Activated T-helper 1 cell treated with anti-CD3 and anti-CD28 coated beads, Interleukin-12 subunit alpha, Interleukin-12 subunit beta, Interleukin-2, Interleukin-4 antibody, amounts not matched to agents 30 ng/mL and 10 ng/mL and 1 ng/mL, durations not matched to agents 14 hours and 24 hours and 36 hours (primary cell): ENCODE measurements at regions of chr14 and their contacts with region 1.

Region 1: GRCh38 chr14:89178802-89179535 is 238.1 kb downstream of the FOXN3 start:
- DNase-seq: no peak
- H3K4me3 Mint-ChIP-seq: no peak overlapping the region
- H3K27ac Mint-ChIP-seq: peak overlapping the region; percentile 25
- H3K4me1 Mint-ChIP-seq: peaks cover 6% of the 10 kb centered on the region
- H3K27me3 Mint-ChIP-seq: no peaks in the 10 kb centered on the region

Region 2: GRCh38 chr14:89129570-89129969 is 49.4 kb before region 1 on chr14:
- intact Hi-C with region 1: no loop called
- DNase-seq: no peak
- H3K4me3 Mint-ChIP-seq: no peak overlapping the region
- H3K27ac Mint-ChIP-seq: no peak overlapping the region
- H3K4me1 Mint-ChIP-seq: no peaks in the 10 kb centered on the region
- H3K27me3 Mint-ChIP-seq: peaks cover 6% of the 10 kb centered on the region

Region 3: GRCh38 chr14:89915114-89915878 is 736.3 kb after region 1 on chr14:
- intact Hi-C with region 1: loop called (anchors 1 kb)
- DNase-seq: peak; percentile 38
- H3K4me3 Mint-ChIP-seq: no peak overlapping the region
- H3K27ac Mint-ChIP-seq: no peak overlapping the region
- H3K4me1 Mint-ChIP-seq: peaks cover 4% of the 10 kb centered on the region
- H3K27me3 Mint-ChIP-seq: peaks cover 12% of the 10 kb centered on the region